Mammary epithelial cell (primary cell): ENCODE measurements at regions of chr7 and their contacts with region 1.

Region 1: DNA sequence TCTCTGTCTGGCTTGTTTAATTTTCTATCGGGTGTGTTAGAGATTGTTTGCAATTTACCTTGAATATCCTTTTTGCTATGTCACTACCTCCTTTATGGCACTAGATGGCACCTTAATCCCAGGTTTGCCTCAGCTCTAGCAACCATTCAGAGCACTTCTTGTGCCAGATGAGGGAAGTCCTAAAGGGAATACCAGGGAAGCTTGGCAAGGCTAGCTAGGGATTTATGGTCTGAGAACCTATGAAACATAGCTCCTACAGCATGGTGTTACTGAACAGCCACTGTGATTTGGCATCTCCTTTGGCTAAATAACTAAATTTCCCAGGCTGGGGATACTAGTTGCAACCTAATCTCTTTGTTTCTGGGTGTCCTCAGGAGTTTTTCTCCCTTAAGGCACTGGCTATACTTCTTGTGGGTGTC is 69.0 kb upstream of the VOPP1 start:
- DNase-seq: peak; percentile 78
- H3K4me3 ChIP-seq: no peak overlapping the region
- H3K27ac ChIP-seq: peak overlapping the region; percentile 73
- H3K4me1 ChIP-seq: peaks cover 4% of the 10 kb centered on the region
- H3K27me3 ChIP-seq: no peaks in the 10 kb centered on the region
- CTCF ChIP-seq: peak; percentile 80 to 82

Region 2: DNA sequence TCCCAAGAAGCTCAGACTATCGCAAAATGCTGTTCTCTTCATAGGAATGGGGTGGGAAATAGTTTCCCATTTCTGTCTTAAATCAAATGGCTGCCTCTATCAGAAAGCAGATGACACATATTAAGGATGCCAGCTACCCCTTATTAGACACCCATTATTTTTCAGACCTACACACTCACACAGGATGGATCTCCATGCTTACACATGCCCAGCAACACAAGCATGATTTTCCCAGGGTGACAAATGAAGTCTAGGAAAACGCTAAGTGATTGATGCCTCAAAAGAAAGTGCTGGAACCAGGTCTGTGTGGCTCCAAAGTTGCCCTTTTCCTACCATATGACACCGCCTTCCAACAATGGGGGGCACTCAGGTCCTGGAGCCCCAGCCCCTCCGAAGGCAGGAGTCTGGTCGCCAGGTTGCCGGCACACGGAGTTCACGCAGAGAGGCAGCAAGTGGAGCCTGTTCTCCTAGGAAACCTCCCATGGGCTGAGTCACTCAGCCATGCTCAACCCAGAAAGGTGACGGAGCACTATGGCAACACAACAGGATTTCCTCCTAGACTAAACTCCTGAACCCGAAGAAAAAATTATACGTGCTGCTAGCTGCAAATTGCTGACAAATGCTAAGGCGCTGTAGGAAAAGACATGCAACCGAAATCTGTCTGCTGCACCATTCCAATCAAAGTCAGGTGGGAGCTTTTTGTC is 88.8 kb before region 1 on chr7:
- CTCF ChIA-PET with region 1: no interaction called
- dilution Hi-C with region 1: no loop called
- in situ Hi-C with region 1: no loop called
- intact Hi-C with region 1: no loop called
- DNase-seq: no peak
- H3K4me3 ChIP-seq: no peak overlapping the region
- H3K27ac ChIP-seq: no peak overlapping the region
- H3K4me1 ChIP-seq: peaks cover 22% of the 10 kb centered on the region
- H3K27me3 ChIP-seq: no peaks in the 10 kb centered on the region
- CTCF ChIP-seq: no peak

Region 3: GRCh38 chr7:55723621-55723941 is 82.3 kb after region 1 on chr7:
- CTCF ChIA-PET with region 1: interaction called, 5 read pairs
- dilution Hi-C with region 1: no loop called
- in situ Hi-C with region 1: no loop called
- intact Hi-C with region 1: loop called (anchors 1 kb)
- DNase-seq: no peak
- H3K4me3 ChIP-seq: no peak overlapping the region
- H3K27ac ChIP-seq: no peak overlapping the region
- H3K4me1 ChIP-seq: no peaks in the 10 kb centered on the region
- H3K27me3 ChIP-seq: no peaks in the 10 kb centered on the region
- CTCF ChIP-seq: no peak

Region 4: GRCh38 chr7:55951637-55952351 is 310.5 kb after region 1 on chr7 and contains the start of gene MRPS17:
- CTCF ChIA-PET with region 1: no interaction called
- dilution Hi-C with region 1: no loop called
- in situ Hi-C with region 1: loop called in 1 of 2 experiments (anchors 25 kb)
- intact Hi-C with region 1: no loop called
- DNase-seq: peak; percentile 87
- H3K4me3 ChIP-seq: peak within 1 kb of the TSS; percentile 68 to 90 (median 77)
- H3K27ac ChIP-seq: peak within 1 kb of the TSS; percentile 75
- H3K4me1 ChIP-seq: peaks cover 4% of the 10 kb centered on the region
- H3K27me3 ChIP-seq: no peaks in the 10 kb centered on the region
- CTCF ChIP-seq: no peak
- total RNA-seq, gene MRPS17: 21.8 to 33.8 TPM

Region 5: GRCh38 chr7:55977831-55978230 is 336.5 kb after region 1 on chr7:
- CTCF ChIA-PET with region 1: no interaction called
- dilution Hi-C with region 1: no loop called
- in situ Hi-C with region 1: loop called (anchors 10 to 25 kb)
- intact Hi-C with region 1: no loop called
- DNase-seq: peak; percentile 20
- H3K4me3 ChIP-seq: no peak overlapping the region
- H3K27ac ChIP-seq: no peak overlapping the region
- H3K4me1 ChIP-seq: no peaks in the 10 kb centered on the region
- H3K27me3 ChIP-seq: no peaks in the 10 kb centered on the region
- CTCF ChIP-seq: no peak

Region 6: DNA sequence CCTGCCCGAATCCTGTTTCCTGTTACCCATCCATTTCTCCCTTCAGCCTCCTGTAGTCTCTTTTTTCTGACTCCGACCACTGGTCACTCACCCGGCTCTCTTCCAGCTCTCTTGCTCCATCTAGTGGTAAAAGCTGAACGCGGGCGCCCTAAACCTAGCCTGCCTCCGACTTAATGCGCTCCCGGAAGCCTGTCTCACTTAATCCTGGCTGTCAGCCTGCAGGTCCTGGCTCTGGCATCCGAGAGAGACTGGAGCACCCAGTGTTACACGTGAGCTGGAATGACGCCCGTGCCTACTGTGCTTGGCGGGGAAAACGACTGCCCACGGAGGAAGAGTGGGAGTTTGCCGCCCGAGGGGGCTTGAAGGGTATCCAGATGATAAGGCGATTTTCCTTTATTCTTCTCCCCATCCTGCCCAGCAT is 433.1 kb after region 1 on chr7:
- CTCF ChIA-PET with region 1: no interaction called
- dilution Hi-C with region 1: no loop called
- in situ Hi-C with region 1: no loop called
- intact Hi-C with region 1: loop called (anchors 1 kb)
- DNase-seq: peak; percentile 74
- H3K4me3 ChIP-seq: no peak overlapping the region
- H3K27ac ChIP-seq: no peak overlapping the region
- H3K4me1 ChIP-seq: peaks cover 3% of the 10 kb centered on the region
- H3K27me3 ChIP-seq: no peaks in the 10 kb centered on the region
- CTCF ChIP-seq: peak; percentile 84 to 94

Region 7: DNA sequence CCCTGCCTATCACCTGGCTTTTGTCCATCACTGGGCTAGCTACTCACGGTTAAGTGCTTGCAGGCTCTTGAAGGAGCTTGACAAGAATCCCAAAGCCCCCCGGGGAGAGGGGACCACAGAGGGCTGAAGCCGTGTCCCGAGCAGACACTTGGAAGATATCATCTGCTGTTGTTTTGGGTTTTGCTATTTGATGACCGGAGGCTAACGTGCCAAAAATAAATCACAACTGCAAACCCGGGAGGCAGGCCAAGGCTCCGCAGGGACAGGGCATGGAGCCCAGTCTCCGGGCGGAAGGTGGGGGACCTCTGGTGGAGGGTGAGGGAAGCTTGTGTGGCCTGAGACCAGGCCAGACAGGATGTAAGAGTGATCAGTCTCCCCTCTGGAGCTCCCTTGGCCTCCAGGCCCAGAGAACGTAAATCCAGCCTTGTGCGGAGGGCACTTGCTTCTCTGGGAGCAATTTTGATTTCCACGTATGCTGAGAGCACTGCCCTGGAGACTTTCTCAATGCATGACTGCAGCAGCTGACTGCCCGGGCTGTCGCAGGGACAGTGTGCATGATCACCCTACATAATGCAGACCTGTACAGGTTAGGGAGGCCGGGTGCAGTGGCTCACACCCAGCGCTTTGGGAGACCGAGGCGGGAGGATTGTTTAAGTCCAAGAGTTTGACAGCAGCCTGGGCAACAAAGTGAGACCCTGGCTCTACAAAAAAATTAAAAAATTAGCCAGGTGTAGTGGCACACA is 451.7 kb after region 1 on chr7 and contains the start of gene PHKG1:
- CTCF ChIA-PET with region 1: no interaction called
- dilution Hi-C with region 1: no loop called
- in situ Hi-C with region 1: loop called in 1 of 2 experiments (anchors 10 kb)
- intact Hi-C with region 1: loop called (anchors 5 kb)
- DNase-seq: peak; percentile 42
- H3K4me3 ChIP-seq: no peak within 1 kb of the TSS
- H3K27ac ChIP-seq: no peak within 1 kb of the TSS
- H3K4me1 ChIP-seq: no peaks in the 10 kb centered on the region
- H3K27me3 ChIP-seq: no peaks in the 10 kb centered on the region
- CTCF ChIP-seq: peak; percentile 53 to 65
- total RNA-seq, gene PHKG1: 0.28 to 0.33 TPM